ENCODE measurements at regions of chr15 and their contacts with region 1.

Region 1: GRCh38 chr15:48800811-48801455 is 9.9 kb downstream of the CEP152 start:
- DNase-seq: no peak
- H3K4me3 ChIP-seq: no peak overlapping the region
- H3K27ac ChIP-seq: no peak overlapping the region
- H3K4me1 ChIP-seq: peaks cover 0 to 28% (median 25%) of the 10 kb centered on the region in 4 donors
- H3K27me3 ChIP-seq: no peaks in the 10 kb centered on the region
- CTCF ChIP-seq: peak; percentile 38 to 49 (median 40)
- EP300 ChIP-seq: no peak
- POLR2A ChIP-seq: no peak

Region 2: GRCh38 chr15:48360841-48361240 is 440.1 kb before region 1 on chr15:
- intact Hi-C with region 1: loop called (anchors 10 kb)
- DNase-seq: no peak
- H3K4me3 ChIP-seq: no peak overlapping the region
- H3K27ac ChIP-seq: no peak overlapping the region
- H3K4me1 ChIP-seq: peaks cover 0 to 8% (median 7%) of the 10 kb centered on the region in 4 donors
- H3K27me3 ChIP-seq: no peaks in the 10 kb centered on the region
- CTCF ChIP-seq: no peak
- EP300 ChIP-seq: no peak
- POLR2A ChIP-seq: no peak